CD4-positive, alpha-beta memory T cell (primary cell): ENCODE measurements at regions of chr19 and their contacts with region 1.

Region 1: GRCh38 chr19:8654591-8655339 is 24.3 kb downstream of the NFILZ start:
- DNase-seq: peak; percentile 59 to 66 (median 65)
- H3K4me3 ChIP-seq: no peak overlapping the region
- H3K4me3 Mint-ChIP-seq: peak overlapping the region; percentile 40 to 81 (median 71)
- H3K27ac ChIP-seq: no peak overlapping the region
- H3K27ac Mint-ChIP-seq: peak overlapping the region in 4 of 7 donors; percentile 47 to 86 (median 70)
- H3K4me1 ChIP-seq: peaks cover 16% of the 10 kb centered on the region
- H3K4me1 Mint-ChIP-seq: peaks cover 13 to 38% (median 29%) of the 10 kb centered on the region in 4 donors
- H3K27me3 ChIP-seq: no peaks in the 10 kb centered on the region
- H3K27me3 Mint-ChIP-seq: no peaks in the 10 kb centered on the region

Region 2: DNA sequence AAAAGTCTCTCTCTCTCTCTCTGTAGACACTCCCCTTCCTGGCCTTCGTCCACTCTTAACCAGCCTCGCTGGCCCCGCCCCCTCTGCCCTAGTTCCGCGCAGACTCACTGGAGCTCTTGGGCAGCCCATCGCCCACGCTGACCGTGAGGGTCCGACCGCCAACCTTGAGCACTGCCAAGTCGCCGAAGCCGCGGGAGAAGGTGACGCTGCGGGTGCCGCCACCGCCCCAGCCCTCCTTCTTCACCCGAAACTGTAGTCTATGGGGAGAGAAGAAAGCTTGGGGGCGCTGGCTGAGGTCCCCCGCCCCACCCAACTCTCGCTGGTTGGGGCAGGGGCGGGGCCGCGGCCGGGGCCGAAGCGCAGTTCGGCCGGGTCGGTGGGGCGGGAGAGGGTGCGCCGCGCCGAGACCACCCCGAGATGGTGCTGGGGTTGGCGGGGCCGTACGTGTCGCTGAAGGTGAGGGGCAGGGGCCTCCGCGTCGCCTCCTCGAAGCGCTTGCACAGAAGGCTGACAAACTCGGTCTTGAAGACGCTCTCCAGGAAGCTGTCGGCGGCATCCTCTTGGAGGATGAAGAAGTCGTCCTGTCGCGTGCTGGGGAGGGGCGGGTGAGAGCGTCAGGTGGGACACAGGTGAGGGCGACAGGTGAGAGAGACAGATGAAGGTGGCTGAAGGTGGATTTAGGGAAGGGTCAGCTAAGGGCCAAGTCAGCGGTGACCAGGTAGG is 128.3 kb before region 1 on chr19:
- CTCF ChIA-PET with region 1: no interaction called
- POLR2A ChIA-PET with region 1: no interaction called
- intact Hi-C with region 1: no loop called
- DNase-seq: no peak
- H3K4me3 ChIP-seq: no peak overlapping the region
- H3K4me3 Mint-ChIP-seq: no peak overlapping the region
- H3K27ac ChIP-seq: no peak overlapping the region
- H3K27ac Mint-ChIP-seq: peak overlapping the region in 5 of 7 donors; percentile 16 to 92 (median 70)
- H3K4me1 ChIP-seq: peaks cover 4% of the 10 kb centered on the region
- H3K4me1 Mint-ChIP-seq: peaks cover 6 to 16% (median 13%) of the 10 kb centered on the region in 4 donors
- H3K27me3 ChIP-seq: no peaks in the 10 kb centered on the region
- H3K27me3 Mint-ChIP-seq: no peaks in the 10 kb centered on the region

Region 3: DNA sequence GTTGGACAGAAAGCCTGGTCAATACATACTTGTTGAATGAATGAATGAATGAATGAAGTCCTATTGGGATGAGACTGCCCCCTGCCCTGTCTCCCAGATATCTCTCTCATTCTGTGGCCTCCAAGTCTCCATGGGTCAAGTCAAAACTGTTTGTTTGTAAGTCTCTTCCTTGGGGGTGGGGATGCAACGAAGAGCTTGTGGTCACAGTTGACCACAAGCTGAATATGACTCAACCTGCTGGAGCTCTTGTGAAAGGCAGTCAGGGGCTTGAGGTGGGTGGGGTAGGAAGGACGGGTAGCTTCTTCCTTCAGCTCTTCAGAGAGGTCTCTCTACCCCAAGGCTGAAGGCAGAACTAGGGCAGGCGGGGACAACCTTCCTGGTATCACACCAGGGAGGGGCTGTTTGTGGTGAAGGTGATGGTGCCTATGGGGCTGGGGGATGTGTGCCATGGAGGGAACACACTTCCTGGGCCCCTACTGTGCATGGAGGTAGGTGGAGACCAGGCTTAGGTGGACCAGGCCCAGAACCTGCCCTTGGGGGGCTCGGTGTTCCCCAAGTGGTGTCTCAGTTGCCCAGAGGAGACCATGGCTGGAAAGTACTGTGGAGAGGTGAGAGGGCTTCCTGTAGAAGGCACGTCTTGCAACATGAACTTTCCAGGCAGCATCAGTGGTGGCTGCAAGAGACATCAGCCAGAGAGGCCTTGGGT is 85.5 kb before region 1 on chr19:
- CTCF ChIA-PET with region 1: no interaction called
- POLR2A ChIA-PET with region 1: no interaction called
- intact Hi-C with region 1: no loop called
- DNase-seq: peak; percentile 69 to 93 (median 77)
- H3K4me3 ChIP-seq: peak overlapping the region; percentile 36 to 60
- H3K4me3 Mint-ChIP-seq: peak overlapping the region; percentile 60 to 97 (median 83)
- H3K27ac ChIP-seq: peak overlapping the region; percentile 41
- H3K27ac Mint-ChIP-seq: peak overlapping the region; percentile 92 to 99 (median 95)
- H3K4me1 ChIP-seq: peaks cover 96% of the 10 kb centered on the region
- H3K4me1 Mint-ChIP-seq: peaks cover 44 to 88% (median 68%) of the 10 kb centered on the region in 4 donors
- H3K27me3 ChIP-seq: no peaks in the 10 kb centered on the region
- H3K27me3 Mint-ChIP-seq: no peaks in the 10 kb centered on the region

Region 4: DNA sequence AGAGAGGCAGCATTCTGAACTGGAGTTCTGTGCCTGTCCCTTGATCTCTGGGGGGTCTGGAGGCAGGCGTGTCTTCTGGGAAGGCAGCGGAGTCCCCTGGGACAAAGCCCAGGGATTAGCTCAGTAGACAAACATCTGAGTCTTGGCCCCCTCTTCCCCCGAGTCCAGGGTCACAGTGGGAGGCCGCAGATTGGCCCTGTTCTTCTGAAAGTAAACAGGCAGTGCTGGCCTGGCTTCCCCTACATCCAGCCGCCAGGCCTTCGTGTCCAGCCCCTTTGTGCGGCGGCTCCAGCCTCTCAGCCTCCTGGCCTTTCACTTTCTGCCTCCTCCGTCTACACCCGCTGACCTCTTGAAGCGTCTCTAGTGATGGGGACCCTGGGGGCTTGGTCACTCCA is 23.3 kb before region 1 on chr19:
- CTCF ChIA-PET with region 1: no interaction called
- POLR2A ChIA-PET with region 1: no interaction called
- intact Hi-C with region 1: no loop called
- DNase-seq: no peak
- H3K4me3 ChIP-seq: no peak overlapping the region
- H3K4me3 Mint-ChIP-seq: no peak overlapping the region
- H3K27ac ChIP-seq: no peak overlapping the region
- H3K27ac Mint-ChIP-seq: no peak overlapping the region
- H3K4me1 ChIP-seq: no peaks in the 10 kb centered on the region
- H3K4me1 Mint-ChIP-seq: peaks cover 0 to 8% (median 2%) of the 10 kb centered on the region in 4 donors
- H3K27me3 ChIP-seq: no peaks in the 10 kb centered on the region
- H3K27me3 Mint-ChIP-seq: peaks cover 0 to 3% of the 10 kb centered on the region in 2 donors

Region 5: DNA sequence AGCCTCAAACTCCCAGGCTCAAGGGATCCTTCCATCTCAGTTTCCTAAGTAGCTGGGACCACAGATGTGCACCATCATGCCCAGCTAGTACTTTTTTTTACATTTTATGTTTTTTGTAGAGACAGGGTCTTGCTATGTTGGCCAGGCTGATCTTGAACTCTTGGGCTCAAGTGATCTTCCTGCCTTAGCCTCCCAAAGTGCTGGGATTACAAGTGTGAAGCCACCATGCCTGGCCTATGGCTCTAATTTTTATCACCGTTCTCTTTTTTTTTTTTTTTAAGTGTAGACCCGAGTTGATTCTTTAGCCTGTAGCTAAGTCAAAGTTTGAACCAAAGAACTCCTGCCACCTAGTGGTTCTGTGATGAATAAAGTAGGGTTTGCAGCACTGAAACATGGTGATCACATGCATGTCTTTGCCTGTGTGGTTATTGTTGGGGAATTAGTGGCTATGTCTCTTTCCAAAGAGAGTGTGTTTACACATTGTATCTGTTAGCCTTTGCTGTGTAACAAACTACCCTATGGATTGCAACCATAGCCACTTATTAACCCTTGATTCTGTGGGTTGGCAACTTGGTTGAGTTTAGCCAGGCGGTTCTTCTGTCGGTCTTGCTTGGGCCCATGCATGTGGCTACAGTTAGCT is 12.7 kb before region 1 on chr19:
- CTCF ChIA-PET with region 1: interaction called, 13 read pairs
- POLR2A ChIA-PET with region 1: no interaction called
- intact Hi-C with region 1: no loop called
- DNase-seq: peak in 4 of 5 donors; percentile 44 to 53 (median 48)
- H3K4me3 ChIP-seq: no peak overlapping the region
- H3K4me3 Mint-ChIP-seq: no peak overlapping the region
- H3K27ac ChIP-seq: no peak overlapping the region
- H3K27ac Mint-ChIP-seq: no peak overlapping the region
- H3K4me1 ChIP-seq: no peaks in the 10 kb centered on the region
- H3K4me1 Mint-ChIP-seq: peaks cover 0 to 4% (median under 1%) of the 10 kb centered on the region in 4 donors
- H3K27me3 ChIP-seq: no peaks in the 10 kb centered on the region
- H3K27me3 Mint-ChIP-seq: peaks cover 16 to 19% of the 10 kb centered on the region in 2 donors

Region 6: DNA sequence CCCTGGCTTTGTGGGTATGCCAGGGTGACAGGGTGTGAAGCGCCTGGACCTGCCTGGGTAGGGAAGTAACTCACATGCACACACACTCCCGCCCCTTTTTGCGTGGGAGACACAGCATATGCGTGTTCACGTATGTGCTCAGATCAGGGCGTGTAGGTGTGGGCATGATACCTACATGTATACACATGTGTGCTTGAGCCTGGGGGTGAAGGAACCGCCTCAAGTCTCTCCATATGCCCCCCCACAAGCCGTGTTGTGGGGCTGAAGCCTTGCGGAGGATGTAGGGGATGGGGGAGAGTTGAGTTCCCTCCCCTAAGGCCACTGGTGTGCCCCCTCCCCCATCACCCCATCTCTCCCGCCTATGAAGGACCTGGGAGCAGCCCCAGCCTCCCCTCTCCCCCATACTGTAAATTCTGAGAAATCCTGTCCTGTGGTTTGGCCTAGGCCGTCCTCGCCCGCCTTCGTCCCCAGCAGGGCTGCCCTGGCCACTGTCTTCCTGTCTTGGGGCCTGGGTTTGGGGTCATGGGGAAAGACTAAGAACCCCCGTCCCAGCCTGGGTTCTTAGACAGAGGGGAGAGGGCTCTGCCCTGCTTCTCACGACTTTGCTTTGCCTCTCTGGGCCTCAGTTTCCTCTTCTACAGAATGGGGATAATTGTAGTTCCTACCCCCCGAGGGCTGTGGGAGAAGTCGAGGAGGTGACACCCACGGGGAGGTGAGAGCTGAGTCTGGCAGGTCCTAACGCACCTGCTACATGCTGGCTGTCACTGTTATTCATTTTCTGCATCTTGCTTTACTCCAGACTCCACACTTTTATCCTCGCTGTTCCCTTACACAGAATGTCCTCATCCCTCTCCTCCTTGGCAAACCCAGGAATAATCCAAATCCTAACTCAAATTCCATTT is 29.5 kb after region 1 on chr19:
- CTCF ChIA-PET with region 1: interaction called, 140 read pairs
- POLR2A ChIA-PET with region 1: no interaction called
- intact Hi-C with region 1: no loop called
- DNase-seq: no peak
- H3K4me3 ChIP-seq: no peak overlapping the region
- H3K4me3 Mint-ChIP-seq: no peak overlapping the region
- H3K27ac ChIP-seq: no peak overlapping the region
- H3K27ac Mint-ChIP-seq: peak overlapping the region in 1 of 7 donors; percentile 8
- H3K4me1 ChIP-seq: peaks cover 4% of the 10 kb centered on the region
- H3K4me1 Mint-ChIP-seq: peaks cover 5 to 33% (median 17%) of the 10 kb centered on the region in 4 donors
- H3K27me3 ChIP-seq: no peaks in the 10 kb centered on the region
- H3K27me3 Mint-ChIP-seq: peaks cover 0 to 2% of the 10 kb centered on the region in 2 donors

Region 7: DNA sequence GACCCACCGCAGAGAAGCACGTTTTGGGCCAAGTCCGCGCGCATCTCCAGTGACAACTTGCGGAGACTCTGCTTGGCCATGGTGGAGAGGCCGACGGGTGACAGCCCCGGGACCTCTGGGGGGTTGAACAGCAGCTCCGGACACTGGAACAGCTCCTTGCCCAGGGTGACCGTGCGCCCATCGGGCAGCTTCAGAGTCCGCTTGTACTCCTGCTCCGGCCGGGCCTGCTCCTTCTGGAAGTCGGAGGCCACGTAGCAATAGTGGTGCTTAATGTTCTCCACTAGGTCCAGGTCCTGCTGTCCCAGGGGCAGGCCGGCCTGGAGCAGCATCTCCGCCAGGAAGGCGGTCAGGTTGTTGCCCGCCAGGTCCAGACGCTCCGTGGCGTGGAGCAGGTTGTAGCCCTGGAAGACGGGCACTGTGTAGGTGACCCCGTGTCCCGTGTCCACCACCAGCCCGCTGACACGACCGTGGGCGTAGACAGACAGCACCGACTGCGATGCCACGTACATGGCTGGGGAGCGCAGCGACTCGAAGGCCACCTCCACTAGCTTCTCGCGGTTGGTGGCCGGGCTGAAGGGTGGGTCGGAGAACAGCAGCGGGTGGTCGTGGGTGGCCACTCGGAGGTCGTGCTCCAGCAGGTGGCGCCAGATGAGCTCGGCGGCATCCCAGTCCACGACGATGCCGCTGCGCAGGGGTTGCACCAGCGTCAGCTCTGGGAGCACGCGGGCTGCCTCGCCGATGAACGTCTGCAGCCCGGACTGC is 43.1 kb after region 1 on chr19:
- CTCF ChIA-PET with region 1: interaction called, 140 read pairs
- POLR2A ChIA-PET with region 1: interaction called, 4 read pairs
- intact Hi-C with region 1: loop called (anchors 1 kb)
- DNase-seq: no peak
- H3K4me3 ChIP-seq: no peak overlapping the region
- H3K4me3 Mint-ChIP-seq: no peak overlapping the region
- H3K27ac ChIP-seq: no peak overlapping the region
- H3K27ac Mint-ChIP-seq: no peak overlapping the region
- H3K4me1 ChIP-seq: peaks cover 50% of the 10 kb centered on the region
- H3K4me1 Mint-ChIP-seq: peaks cover 26 to 62% (median 45%) of the 10 kb centered on the region in 4 donors
- H3K27me3 ChIP-seq: no peaks in the 10 kb centered on the region
- H3K27me3 Mint-ChIP-seq: no peaks in the 10 kb centered on the region

Region 8: DNA sequence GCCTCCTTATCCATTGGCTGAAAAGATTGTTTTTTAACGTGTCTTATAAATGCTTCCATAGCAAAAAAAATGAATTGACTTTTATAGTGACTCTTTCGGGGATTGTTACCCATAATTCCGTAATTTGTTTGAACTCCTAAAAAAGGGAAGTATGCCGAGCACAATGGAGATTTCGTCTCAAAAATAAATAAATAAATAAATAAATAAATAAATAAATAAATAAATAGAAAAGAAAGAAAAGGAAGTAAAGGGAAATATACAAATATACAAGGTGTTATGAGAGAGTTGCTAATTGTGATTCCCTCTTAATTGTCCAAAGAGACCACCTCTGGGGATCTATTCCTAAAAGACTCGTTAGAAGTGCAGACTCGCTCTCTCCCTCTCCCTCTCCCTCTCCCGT is 83.6 kb after region 1 on chr19:
- CTCF ChIA-PET with region 1: no interaction called
- POLR2A ChIA-PET with region 1: no interaction called
- intact Hi-C with region 1: no loop called
- DNase-seq: no peak
- H3K4me3 ChIP-seq: no peak overlapping the region
- H3K4me3 Mint-ChIP-seq: no peak overlapping the region
- H3K27ac ChIP-seq: no peak overlapping the region
- H3K27ac Mint-ChIP-seq: peak overlapping the region in 1 of 7 donors; percentile 4
- H3K4me1 ChIP-seq: no peaks in the 10 kb centered on the region
- H3K4me1 Mint-ChIP-seq: no peaks in the 10 kb centered on the region
- H3K27me3 ChIP-seq: no peaks in the 10 kb centered on the region
- H3K27me3 Mint-ChIP-seq: no peaks in the 10 kb centered on the region

Region 9: GRCh38 chr19:8832132-8833021 is 177.6 kb after region 1 on chr19 and contains the starts of genes MBD3L1 and ZNF558:
- CTCF ChIA-PET with region 1: no interaction called
- POLR2A ChIA-PET with region 1: no interaction called
- intact Hi-C with region 1: loop called (anchors 2 kb)
- DNase-seq: peak; percentile 100
- H3K4me3 ChIP-seq: peak within 1 kb of the TSS; percentile 79 to 84
- H3K4me3 Mint-ChIP-seq: peak within 1 kb of the TSS; percentile 83 to 98 (median 92)
- H3K27ac ChIP-seq: peak within 1 kb of the TSS; percentile 81
- H3K27ac Mint-ChIP-seq: peak within 1 kb of the TSS; percentile 96 to 99 (median 98)
- H3K4me1 ChIP-seq: peaks cover 15% of the 10 kb centered on the region
- H3K4me1 Mint-ChIP-seq: peaks cover 21 to 30% (median 25%) of the 10 kb centered on the region in 4 donors
- H3K27me3 ChIP-seq: no peaks in the 10 kb centered on the region
- H3K27me3 Mint-ChIP-seq: no peaks in the 10 kb centered on the region
- total RNA-seq, gene MBD3L1: not detected
- total RNA-seq, gene ZNF558: 44.6 to 45.3 TPM